Panc1 (cell line): ENCODE measurements at regions of chr7 and their contacts with region 1.

Region 1: GRCh38 chr7:139543801-139544603 is 20.5 kb downstream of the CLEC2L start:
- DNase-seq: no peak
- ATAC-seq: peak; percentile 46
- H3K4me3 ChIP-seq: no peak overlapping the region
- H3K27ac ChIP-seq: no peak overlapping the region
- H3K4me1 ChIP-seq: no peaks in the 10 kb centered on the region
- H3K27me3 ChIP-seq: no peaks in the 10 kb centered on the region
- CTCF ChIP-seq: no peak

Region 2: DNA sequence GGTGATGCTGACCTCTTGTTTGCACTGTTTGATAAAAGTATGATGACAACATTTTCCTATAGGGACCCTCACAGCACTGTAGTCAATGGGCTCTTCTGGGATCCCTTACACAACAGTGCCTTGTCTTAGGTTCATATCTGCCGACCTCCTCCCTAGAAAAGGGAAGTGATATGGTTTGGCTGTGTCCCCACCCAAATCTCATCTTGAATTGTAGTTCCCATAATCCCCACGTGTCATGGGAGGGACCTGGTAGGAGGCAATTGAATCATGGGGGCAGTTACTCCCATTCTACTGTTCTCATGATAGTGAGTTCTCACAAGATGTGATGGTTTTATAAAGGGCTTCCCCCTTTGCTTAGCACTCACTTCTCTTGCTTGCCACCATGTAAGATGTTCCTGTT is 457.5 kb before region 1 on chr7:
- CTCF ChIA-PET with region 1: no interaction called
- POLR2A ChIA-PET with region 1: no interaction called
- in situ Hi-C with region 1: no loop called
- intact Hi-C with region 1: no loop called
- DNase-seq: no peak
- ATAC-seq: no peak
- H3K4me3 ChIP-seq: no peak overlapping the region
- H3K27ac ChIP-seq: no peak overlapping the region
- H3K4me1 ChIP-seq: no peaks in the 10 kb centered on the region
- H3K27me3 ChIP-seq: no peaks in the 10 kb centered on the region
- CTCF ChIP-seq: no peak

Region 3: GRCh38 chr7:139515266-139515665 is 28.7 kb before region 1 on chr7:
- CTCF ChIA-PET with region 1: no interaction called
- POLR2A ChIA-PET with region 1: interaction called, 12 read pairs
- in situ Hi-C with region 1: no loop called
- intact Hi-C with region 1: no loop called
- DNase-seq: no peak
- ATAC-seq: no peak
- H3K4me3 ChIP-seq: no peak overlapping the region
- H3K27ac ChIP-seq: no peak overlapping the region
- H3K4me1 ChIP-seq: no peaks in the 10 kb centered on the region
- H3K27me3 ChIP-seq: no peaks in the 10 kb centered on the region
- CTCF ChIP-seq: no peak

Region 4: GRCh38 chr7:139526578-139527544 is 17.1 kb before region 1 on chr7:
- CTCF ChIA-PET with region 1: no interaction called
- POLR2A ChIA-PET with region 1: interaction called, 14 read pairs
- in situ Hi-C with region 1: no loop called
- intact Hi-C with region 1: no loop called
- DNase-seq: no peak
- ATAC-seq: no peak
- H3K4me3 ChIP-seq: no peak overlapping the region
- H3K27ac ChIP-seq: no peak overlapping the region
- H3K4me1 ChIP-seq: no peaks in the 10 kb centered on the region
- H3K27me3 ChIP-seq: peaks cover 6% of the 10 kb centered on the region
- CTCF ChIP-seq: no peak

Region 5: DNA sequence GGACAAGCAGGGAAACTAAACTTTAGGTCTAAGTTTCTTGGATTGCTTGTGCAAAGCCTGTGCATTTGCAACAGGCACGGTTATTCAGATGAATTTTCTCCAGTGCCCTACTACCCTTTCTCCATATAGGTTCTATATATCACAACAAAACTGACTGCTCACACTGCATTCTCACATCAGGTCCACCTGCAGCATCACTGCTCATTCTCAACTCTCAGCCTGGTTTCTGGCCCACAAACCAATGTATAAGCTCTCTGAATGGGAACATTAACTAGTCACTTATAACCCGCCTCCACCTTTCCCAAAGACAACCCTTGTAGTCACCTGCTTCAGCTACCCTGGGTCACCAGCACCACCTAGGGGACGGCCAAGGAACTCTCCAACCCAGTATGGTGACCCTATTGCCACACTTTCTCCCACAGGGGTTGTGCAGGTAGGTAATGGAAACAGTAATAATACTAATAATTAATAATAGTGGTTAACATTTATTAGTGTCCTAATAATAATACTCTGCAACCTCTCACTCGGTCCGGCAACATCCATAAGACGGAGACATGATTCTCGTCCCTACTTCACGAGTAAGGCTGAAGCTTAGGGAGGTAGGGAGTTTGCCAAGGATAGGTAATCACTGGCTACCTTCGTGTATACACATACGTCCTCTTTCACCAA is 76.8 kb after region 1 on chr7:
- CTCF ChIA-PET with region 1: no interaction called
- POLR2A ChIA-PET with region 1: no interaction called
- in situ Hi-C with region 1: no loop called
- intact Hi-C with region 1: no loop called
- DNase-seq: peak; percentile 28
- ATAC-seq: peak; percentile 83
- H3K4me3 ChIP-seq: no peak overlapping the region
- H3K27ac ChIP-seq: no peak overlapping the region
- H3K4me1 ChIP-seq: no peaks in the 10 kb centered on the region
- H3K27me3 ChIP-seq: no peaks in the 10 kb centered on the region
- CTCF ChIP-seq: peak; percentile 87

Region 6: DNA sequence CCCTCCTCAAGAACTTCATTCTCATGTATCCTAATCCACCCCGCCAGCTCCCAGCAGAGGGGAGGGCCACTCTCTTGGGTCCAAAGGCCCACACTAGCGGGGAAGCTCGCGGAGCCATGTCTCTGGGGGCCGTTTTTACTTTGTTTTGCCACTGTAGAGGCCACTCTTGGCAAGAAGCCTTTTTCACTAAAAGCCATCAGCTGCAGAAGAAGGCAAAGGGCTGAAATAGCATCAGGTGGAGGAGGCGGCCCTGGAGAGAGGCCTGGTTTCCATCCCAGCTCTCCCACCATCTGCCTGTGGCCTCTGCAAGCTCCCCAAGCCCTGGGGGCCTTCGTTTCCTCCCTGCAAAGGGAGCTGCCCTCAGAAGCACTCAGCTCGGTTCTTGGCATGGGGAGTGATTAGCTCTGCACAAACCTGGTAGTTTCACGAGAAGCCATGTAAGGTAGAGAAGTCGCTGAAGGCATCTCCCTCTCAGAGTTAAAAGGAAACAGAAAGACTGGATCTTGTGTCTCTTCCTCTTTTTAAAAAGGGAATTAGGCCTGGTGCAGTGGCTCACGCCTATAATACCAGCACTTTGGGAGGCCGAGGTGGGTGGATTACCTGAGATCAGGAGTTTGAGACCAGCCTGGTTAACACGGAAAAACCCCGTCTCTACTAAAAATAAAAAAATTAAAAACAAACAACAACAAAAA is 448.5 kb after region 1 on chr7:
- CTCF ChIA-PET with region 1: no interaction called
- POLR2A ChIA-PET with region 1: no interaction called
- in situ Hi-C with region 1: no loop called
- intact Hi-C with region 1: no loop called
- DNase-seq: no peak
- ATAC-seq: no peak
- H3K4me3 ChIP-seq: no peak overlapping the region
- H3K27ac ChIP-seq: no peak overlapping the region
- H3K4me1 ChIP-seq: no peaks in the 10 kb centered on the region
- H3K27me3 ChIP-seq: no peaks in the 10 kb centered on the region
- CTCF ChIP-seq: no peak

Region 7: GRCh38 chr7:140439359-140439758 is 895.4 kb after region 1 on chr7:
- CTCF ChIA-PET with region 1: no interaction called
- POLR2A ChIA-PET with region 1: no interaction called
- in situ Hi-C with region 1: no loop called
- intact Hi-C with region 1: no loop called
- DNase-seq: no peak
- ATAC-seq: no peak
- H3K4me3 ChIP-seq: no peak overlapping the region
- H3K27ac ChIP-seq: no peak overlapping the region
- H3K4me1 ChIP-seq: no peaks in the 10 kb centered on the region
- H3K27me3 ChIP-seq: no peaks in the 10 kb centered on the region
- CTCF ChIP-seq: no peak